ENCODE measurements at regions of chr12 and their contacts with region 1.

Region 1: GRCh38 chr12:102811110-102811737 is 105.8 kb downstream of the PAH start:
- DNase-seq: peak; percentile 25
- CTCF ChIP-seq: peak; percentile 61

Region 2: GRCh38 chr12:102551186-102551585 is 260.0 kb before region 1 on chr12:
- CTCF ChIA-PET with region 1: no interaction called
- POLR2A ChIA-PET with region 1: no interaction called
- DNase-seq: no peak
- CTCF ChIP-seq: no peak

Region 3: DNA sequence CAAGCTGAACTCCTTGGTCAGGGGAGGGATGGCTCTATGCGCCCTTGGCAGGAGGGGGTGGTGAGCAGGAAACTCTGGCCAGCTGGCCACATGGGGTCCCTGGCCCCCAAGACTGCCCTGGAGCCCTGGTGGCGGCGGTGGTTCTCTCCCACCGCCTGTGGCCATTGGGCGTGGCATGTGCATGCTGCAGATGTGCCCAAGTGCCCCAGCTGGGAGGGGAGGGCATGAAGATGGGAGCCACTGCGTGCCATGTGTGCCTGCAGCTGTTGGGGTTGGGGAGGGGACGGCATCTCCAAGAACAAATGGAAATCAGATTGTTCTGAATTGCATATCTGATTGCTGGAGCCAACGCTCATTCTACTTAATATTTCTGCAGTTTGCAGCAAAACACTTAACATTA is 215.2 kb before region 1 on chr12:
- CTCF ChIA-PET with region 1: no interaction called
- POLR2A ChIA-PET with region 1: no interaction called
- DNase-seq: no peak
- CTCF ChIP-seq: no peak

Region 4: DNA sequence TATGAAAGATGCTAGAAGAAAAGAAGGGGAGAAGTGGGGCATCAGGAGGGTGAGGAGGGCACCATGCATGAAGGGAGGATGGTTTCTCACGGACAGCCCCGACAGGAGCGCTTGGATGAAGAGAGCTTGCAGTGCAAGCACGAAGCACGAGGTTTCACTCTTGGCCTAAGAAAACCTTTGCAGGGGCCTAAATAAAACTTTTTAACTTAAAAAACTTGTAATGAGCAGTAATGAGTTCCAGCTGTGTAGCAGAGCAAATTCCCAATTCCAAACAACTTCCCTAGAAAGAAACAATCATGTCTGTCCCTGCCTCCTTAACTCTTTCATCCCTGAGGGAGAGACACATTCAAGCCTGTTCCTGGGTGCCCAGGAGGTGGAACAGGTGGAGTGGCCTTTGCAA is 13.7 kb before region 1 on chr12:
- CTCF ChIA-PET with region 1: interaction called, 11 read pairs
- POLR2A ChIA-PET with region 1: no interaction called
- DNase-seq: no peak
- CTCF ChIP-seq: no peak

Measured in GM10248 (cell line).